Prostate gland (tissue), 2 donors: ENCODE measurements at regions of chr6 and their contacts with region 1.

Region 1: GRCh38 chr6:32113386-32114352 is 4.5 kb upstream of the TNXB start:
- DNase-seq: no peak
- H3K4me3 ChIP-seq: no peak overlapping the region
- H3K27ac ChIP-seq: peak overlapping the region; percentile 47 to 48
- H3K4me1 ChIP-seq: peaks cover under 1% of the 10 kb centered on the region
- H3K27me3 ChIP-seq: no peaks in the 10 kb centered on the region
- CTCF ChIP-seq: peak in 1 of 4 experiments; percentile 42
- POLR2A ChIP-seq: no peak

Region 2: GRCh38 chr6:31870385-31870921 is 243.2 kb before region 1 on chr6:
- intact Hi-C with region 1: no loop called
- DNase-seq: no peak
- H3K4me3 ChIP-seq: no peak overlapping the region
- H3K27ac ChIP-seq: peak overlapping the region; percentile 98
- H3K4me1 ChIP-seq: peaks cover 22% of the 10 kb centered on the region
- H3K27me3 ChIP-seq: no peaks in the 10 kb centered on the region
- CTCF ChIP-seq: no peak
- POLR2A ChIP-seq: no peak

Region 3: DNA sequence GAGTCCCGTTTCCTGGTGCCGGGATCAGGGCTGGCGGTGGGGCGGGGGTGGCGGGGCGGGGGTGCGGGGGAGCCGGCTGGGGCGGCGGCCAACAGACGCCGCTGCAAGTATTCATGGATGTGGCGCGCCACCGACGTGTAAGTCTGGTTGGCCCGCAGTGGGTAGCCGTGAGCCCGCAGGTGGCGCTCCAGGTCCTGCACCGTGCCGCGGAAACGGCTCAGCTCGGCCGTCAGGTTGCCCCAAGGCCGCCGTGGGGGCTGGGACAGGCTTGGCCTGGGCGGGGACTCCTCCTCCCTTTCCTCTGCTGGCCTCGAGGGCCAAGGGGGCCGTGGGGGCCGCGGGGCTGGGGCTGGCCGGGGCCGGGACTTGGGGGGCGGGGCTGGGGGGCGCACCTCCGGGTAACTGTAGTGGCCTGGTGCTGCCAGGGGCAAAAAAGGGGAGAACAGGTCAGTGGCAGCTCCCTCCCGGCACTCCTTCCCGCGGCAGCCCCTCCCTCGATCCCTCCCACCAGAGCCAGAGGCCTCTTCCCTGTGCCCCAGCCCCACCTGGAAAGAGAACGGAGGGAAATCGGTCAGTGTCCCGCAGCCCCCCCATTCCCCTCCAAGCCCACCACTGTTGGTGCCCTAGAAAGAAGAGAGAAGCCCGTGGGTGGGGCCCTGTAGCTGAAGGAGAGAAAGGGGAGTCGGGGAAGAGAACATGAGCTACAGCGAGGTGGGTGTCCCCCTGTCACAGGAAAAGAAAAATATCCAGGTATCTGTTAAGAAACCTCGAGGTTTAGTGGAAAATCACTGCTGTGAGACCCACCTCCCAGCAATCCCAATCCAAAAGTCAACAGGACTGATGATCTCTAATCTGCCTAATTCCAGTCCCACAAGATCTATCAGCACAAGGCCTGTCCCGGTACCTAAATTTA is 25.8 kb before region 1 on chr6:
- intact Hi-C with region 1: loop called (anchors 1 kb)
- DNase-seq: peak; percentile 73
- H3K4me3 ChIP-seq: peak overlapping the region in 1 of 2 donors; percentile 7
- H3K27ac ChIP-seq: peak overlapping the region; percentile 59 to 63
- H3K4me1 ChIP-seq: no peaks in the 10 kb centered on the region
- H3K27me3 ChIP-seq: no peaks in the 10 kb centered on the region
- CTCF ChIP-seq: peak; percentile 36 to 78 (median 59)
- POLR2A ChIP-seq: no peak